ENCODE measurements at regions of chr9 and their contacts with region 1.

Region 1: DNA sequence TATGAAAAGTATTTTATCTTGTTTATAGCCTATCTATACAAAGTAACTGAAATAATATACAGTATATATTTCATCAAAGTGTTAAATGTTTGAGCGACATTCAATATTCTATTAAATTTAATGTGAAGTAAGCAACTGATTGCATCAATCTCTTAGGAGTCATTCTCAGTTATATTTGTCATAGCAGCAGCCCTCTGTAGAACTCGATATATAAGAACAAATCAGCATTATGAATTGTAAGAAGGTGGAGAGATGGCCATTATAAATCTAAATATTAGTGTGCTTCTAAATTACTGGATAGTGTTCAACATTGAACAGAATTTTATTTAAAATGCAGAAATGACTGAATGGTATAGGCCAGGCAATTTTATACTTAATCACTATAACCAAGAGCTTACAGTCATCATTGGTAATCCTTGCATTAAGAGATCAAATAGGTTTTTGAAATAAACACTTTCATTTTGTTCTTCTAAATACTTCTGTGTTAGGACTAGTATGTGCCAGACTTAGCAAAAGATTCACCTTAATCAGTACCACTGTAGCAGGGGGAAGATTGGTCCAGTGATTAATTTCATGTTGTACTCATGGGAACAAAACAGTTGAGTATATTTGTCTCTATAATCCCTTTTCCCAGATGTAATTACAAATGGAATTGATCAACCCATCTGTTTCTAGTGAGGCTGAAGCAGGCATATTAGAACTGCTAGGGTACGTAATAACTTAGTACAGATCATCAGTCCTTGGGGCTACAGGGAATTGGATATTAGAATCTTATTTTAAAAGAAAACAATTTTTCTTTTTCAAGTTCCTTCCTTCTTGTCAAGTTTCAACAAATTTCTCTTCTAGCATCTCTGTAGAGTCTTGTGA is 108.3 kb upstream of the TYRP1 start:
- DNase-seq: no peak
- ATAC-seq: no peak
- H3K4me3 ChIP-seq: no peak overlapping the region
- H3K4me3 Mint-ChIP-seq: no peak overlapping the region
- H3K27ac ChIP-seq: no peak overlapping the region
- H3K27ac Mint-ChIP-seq: no peak overlapping the region
- H3K4me1 ChIP-seq: no peaks in the 10 kb centered on the region
- H3K4me1 Mint-ChIP-seq: no peaks in the 10 kb centered on the region
- H3K27me3 ChIP-seq: no peaks in the 10 kb centered on the region
- H3K27me3 Mint-ChIP-seq: no peaks in the 10 kb centered on the region

Region 2: GRCh38 chr9:12666813-12667212 is 81.9 kb after region 1 on chr9:
- CTCF ChIA-PET with region 1: no interaction called
- POLR2A ChIA-PET with region 1: no interaction called
- intact Hi-C with region 1: loop called in 1 of 2 experiments (anchors 10 kb)
- DNase-seq: no peak
- ATAC-seq: no peak
- H3K4me3 ChIP-seq: no peak overlapping the region
- H3K4me3 Mint-ChIP-seq: no peak overlapping the region
- H3K27ac ChIP-seq: no peak overlapping the region
- H3K27ac Mint-ChIP-seq: no peak overlapping the region
- H3K4me1 ChIP-seq: no peaks in the 10 kb centered on the region
- H3K4me1 Mint-ChIP-seq: no peaks in the 10 kb centered on the region
- H3K27me3 ChIP-seq: no peaks in the 10 kb centered on the region
- H3K27me3 Mint-ChIP-seq: no peaks in the 10 kb centered on the region

Measured in naive thymus-derived CD4-positive, alpha-beta T cell (primary cell).